Panc1 (cell line): ENCODE measurements at regions of chr2 and their contacts with region 1.

Region 1: DNA sequence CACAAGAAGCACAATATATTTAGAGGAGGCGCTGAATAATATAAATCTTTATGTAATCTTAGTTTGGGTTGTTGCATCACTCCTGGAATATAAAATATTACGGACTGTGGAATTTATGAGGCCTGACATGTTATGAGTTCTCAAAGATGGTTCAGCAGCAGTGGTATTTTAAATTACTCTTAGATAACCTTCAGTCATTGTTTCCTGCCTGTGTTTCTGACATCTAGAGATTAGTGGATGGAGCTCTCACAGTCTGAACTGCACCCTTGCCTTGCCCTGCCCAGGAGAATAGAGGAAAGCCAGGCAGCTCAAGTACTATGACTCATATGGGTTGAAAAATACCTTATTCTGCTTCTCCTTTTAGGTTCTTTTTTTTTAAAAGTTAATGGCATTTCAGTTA is 70.0 kb downstream of the ACSL3 start:
- DNase-seq: no peak
- ATAC-seq: no peak
- H3K4me3 ChIP-seq: no peak overlapping the region
- H3K27ac ChIP-seq: no peak overlapping the region
- H3K4me1 ChIP-seq: no peaks in the 10 kb centered on the region
- H3K27me3 ChIP-seq: no peaks in the 10 kb centered on the region
- CTCF ChIP-seq: no peak

Region 2: GRCh38 chr2:222912117-222912516 is 18.7 kb before region 1 on chr2:
- CTCF ChIA-PET with region 1: no interaction called
- POLR2A ChIA-PET with region 1: interaction called, 13 read pairs
- in situ Hi-C with region 1: no loop called
- intact Hi-C with region 1: no loop called
- DNase-seq: no peak
- ATAC-seq: no peak
- H3K4me3 ChIP-seq: no peak overlapping the region
- H3K27ac ChIP-seq: no peak overlapping the region
- H3K4me1 ChIP-seq: peaks cover 2% of the 10 kb centered on the region; the same call in 1 of the 2 replicates
- H3K27me3 ChIP-seq: no peaks in the 10 kb centered on the region
- CTCF ChIP-seq: no peak

Region 3: GRCh38 chr2:223093436-223094241 is 162.8 kb after region 1 on chr2:
- CTCF ChIA-PET with region 1: no interaction called
- POLR2A ChIA-PET with region 1: no interaction called
- in situ Hi-C with region 1: no loop called
- intact Hi-C with region 1: no loop called
- DNase-seq: no peak
- ATAC-seq: no peak
- H3K4me3 ChIP-seq: no peak overlapping the region
- H3K27ac ChIP-seq: no peak overlapping the region
- H3K4me1 ChIP-seq: no peaks in the 10 kb centered on the region
- H3K27me3 ChIP-seq: no peaks in the 10 kb centered on the region
- CTCF ChIP-seq: no peak